Posterior cingulate gyrus (tissue), 11 donors: ENCODE measurements at regions of chr4 and their contacts with region 1.

Region 1: DNA sequence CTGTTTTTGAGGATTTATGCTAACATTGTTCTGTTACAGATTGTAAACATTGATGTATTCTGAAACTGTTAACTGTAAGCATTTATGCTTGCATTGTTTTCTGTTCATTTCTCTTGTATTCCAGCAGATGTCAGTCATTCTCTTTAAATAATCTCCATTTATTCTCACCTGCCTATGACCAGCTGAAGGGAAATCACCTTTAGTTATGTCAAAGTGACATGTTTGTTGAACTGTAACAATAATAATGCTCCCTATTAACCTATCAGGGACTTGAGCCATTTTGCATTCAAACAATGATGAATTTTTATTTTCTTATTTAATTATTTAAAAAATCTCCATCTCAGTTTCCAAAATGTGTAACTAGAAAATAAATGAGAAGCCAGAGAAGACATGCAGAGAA is 58.0 kb downstream of the SPCS3 start:
- DNase-seq: no peak

Region 2: GRCh38 chr4:176587920-176588319 is 210.1 kb after region 1 on chr4:
- intact Hi-C with region 1: no loop called
- DNase-seq: no peak

Region 3: GRCh38 chr4:176601124-176601523 is 223.3 kb after region 1 on chr4:
- intact Hi-C with region 1: no loop called
- DNase-seq: peak in 1 of 10 donors; percentile 46

Region 4: DNA sequence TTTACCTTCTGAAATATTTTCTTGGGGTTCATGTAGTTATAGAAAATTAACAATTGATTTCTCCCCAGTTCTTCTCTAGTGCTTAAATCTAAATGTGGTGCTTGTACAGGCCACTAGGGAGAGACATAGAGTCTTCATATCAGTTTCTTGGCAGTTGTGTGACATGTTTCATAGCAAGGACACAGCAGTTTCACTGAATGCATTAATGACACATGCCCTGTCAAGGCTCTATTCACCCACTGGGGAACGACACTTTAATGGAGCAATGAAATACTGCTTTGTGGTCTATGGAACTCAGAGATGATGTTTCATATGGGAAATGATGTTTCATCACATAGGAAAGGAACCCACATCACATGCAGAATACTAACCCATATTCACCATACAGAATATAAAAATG is 412.2 kb after region 1 on chr4:
- intact Hi-C with region 1: loop called (anchors 5 kb)
- DNase-seq: no peak

Region 5: DNA sequence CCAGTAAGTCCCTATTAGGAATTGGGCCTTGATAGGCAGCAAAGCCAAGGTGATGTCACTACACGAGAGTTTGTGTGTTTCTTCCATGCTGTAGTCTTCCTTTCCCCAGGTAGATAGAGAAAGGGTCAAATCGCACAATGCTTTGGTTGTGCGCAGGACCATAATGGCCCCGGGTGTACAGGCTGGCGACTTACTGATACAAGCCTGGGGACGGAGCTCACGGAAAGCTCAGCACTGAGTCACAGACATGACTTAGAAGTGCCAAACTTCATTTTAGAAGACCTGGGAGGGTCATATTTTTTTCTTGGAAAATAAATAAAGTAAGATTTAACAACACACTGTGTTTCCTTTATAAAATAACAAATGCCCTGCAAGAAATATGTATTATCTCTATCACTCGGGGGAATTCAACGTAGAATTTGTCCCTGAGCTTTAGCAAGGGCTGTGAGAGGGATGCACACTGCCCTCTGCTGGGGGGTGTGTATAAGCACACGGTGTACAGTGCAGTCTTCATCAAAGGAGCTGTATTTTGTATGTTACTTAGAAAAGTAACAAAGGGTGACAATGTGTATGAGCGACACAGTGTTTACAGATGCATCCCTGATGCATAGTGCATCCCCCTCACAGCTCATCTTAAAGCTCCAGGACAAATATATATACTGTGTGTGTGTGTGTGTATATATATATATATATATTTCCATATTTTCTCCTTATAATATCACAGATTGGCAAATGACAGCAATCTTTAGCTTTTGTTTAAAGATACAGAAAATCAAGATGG is 669.5 kb after region 1 on chr4:
- intact Hi-C with region 1: loop called (anchors 2 kb)
- DNase-seq: peak in 9 of 10 donors; percentile 31 to 94 (median 69)

Region 6: DNA sequence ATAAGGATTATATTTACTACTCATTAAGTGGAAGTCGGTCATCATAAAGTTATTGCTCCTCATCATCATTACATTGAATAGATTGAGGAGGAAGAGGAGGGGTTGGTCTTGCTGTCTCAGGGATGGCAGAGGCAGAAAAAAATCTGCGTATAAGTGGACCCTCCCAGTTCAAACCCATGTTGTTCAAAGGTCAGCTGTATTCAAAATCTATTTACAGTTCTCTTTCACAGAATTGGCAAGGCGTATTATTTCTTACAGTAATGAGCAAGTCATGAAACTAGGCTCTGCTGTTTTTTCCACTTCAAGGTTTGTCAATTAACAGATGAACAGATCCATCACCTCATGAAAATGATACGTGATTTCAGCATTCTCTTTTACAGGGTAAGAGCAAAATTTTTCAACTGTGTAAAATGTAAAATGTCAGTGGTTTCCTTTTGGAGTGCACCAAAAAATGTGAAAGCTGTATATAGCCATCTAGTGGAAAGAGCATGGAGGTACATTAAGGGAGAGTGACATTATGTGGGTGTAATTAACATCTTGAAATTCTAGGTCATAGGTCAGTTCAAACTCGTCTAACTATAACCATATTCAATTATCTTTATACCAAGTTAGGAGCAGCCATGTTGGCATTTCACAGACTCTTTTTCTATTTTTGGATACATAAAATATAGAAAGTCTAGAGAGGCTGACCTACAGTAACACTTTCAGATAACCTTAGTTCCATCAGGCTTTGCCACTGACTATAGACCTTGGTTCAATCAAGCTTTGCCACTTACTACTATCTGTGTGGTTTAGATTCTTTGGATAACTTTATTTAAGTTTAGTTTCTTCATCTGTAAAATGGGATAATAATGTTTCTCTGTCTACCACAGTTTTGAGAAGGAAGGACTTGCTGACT is 961.9 kb after region 1 on chr4:
- intact Hi-C with region 1: loop called (anchors 5 kb)
- DNase-seq: no peak